Activated naive CD4-positive, alpha-beta T cell treated with anti-CD3 and anti-CD28 coated beads for 36 hours (primary cell): ENCODE measurements at regions of chr19 and their contacts with region 1.

Region 1: DNA sequence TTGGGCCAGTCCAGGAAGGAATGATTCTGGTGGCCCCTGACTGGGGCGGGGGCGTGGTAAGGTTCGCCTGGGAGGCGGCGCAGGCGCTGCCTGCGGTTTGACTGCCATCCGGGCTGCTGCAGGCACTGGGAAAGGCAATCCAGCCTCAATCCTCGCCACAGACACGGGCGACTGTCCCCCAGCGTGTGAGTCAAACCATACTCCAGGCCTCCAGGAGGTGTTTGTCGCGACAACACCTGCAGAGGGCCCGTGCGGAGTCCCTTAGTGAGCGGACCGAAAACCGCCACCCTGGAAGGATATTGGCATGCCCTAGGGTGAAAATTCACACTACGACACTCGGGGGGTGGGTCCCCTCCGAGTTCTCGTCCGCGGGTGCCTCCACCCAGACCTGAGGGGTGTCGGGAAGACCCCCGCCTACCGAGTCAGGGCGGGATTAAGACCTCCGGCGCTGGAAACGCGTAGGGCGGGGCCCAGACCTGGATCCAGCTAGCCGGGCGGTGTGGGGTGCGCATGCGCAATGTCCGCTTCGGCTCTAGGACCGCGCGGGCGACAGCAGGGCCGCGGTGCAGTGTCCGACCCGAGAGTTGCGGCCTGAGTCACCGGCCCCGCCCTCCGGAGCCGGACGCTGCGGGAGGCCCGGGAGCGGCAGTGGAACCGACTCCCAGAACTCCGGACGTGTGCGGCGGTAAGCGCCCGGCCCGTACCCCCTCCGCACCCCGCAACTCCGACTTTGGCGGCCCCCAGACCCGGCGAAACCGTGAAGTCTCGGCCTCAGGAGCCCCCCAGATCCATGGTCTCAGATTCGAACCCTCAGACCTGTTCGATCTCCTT is at the start of gene CAPNS1:
- DNase-seq: peak; percentile 92
- H3K4me3 Mint-ChIP-seq: peak within 1 kb of the TSS; percentile 90
- H3K27ac Mint-ChIP-seq: peak within 1 kb of the TSS; percentile 94
- H3K4me1 Mint-ChIP-seq: peaks cover 17% of the 10 kb centered on the region
- H3K27me3 Mint-ChIP-seq: no peaks in the 10 kb centered on the region
- total RNA-seq, gene CAPNS1: 301 to 307 TPM

Region 2: DNA sequence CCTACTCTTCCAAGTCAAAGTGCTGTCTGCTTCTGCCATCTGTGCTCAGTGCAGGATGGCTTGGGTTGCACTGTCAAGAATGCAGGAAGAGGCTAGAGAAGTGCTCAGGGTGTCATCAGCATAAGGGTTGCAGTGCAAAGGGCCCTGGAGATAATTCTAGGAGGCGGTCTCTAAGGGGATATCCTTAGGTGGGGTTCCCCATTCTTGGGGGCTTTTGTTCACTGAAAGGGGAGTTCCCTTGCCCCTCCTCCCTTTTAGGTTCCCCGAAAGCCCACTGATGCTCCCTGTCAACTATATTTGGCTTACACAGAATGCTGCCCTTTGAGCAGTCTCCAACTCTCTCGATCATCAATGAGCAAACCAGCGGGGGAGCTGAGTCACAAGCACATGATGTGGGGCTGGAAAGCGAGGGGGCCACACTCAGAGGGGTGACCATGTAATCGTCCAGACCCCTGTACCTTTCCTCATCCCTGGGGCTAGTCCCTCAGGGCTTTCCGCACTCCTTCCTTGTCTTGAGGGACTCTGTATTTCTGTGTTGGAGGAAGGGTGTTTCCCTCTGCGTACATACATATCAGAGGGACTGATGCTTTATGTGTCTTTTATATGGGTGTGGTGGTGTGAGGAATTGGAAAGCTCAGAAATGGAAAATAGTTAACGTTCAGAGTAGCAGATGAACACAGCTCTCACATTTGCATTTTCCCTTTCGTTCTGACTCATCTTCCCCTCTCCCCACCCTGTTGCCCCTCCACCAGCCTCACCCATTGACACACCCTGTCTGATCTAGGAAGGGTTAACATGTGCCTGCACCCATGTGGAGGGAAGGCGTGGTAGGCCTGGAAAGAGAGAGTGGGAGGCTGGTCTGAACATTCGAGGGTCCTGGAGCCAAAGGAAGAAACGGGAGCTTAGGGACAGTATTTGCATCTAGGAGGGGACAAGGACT is 428.6 kb before region 1 on chr19:
- CTCF ChIA-PET with region 1: no interaction called
- intact Hi-C with region 1: loop called (anchors 5 kb)
- DNase-seq: peak; percentile 87
- H3K4me3 Mint-ChIP-seq: peak overlapping the region; percentile 52
- H3K27ac Mint-ChIP-seq: peak overlapping the region; percentile 100
- H3K4me1 Mint-ChIP-seq: peaks cover 44% of the 10 kb centered on the region
- H3K27me3 Mint-ChIP-seq: no peaks in the 10 kb centered on the region

Region 3: DNA sequence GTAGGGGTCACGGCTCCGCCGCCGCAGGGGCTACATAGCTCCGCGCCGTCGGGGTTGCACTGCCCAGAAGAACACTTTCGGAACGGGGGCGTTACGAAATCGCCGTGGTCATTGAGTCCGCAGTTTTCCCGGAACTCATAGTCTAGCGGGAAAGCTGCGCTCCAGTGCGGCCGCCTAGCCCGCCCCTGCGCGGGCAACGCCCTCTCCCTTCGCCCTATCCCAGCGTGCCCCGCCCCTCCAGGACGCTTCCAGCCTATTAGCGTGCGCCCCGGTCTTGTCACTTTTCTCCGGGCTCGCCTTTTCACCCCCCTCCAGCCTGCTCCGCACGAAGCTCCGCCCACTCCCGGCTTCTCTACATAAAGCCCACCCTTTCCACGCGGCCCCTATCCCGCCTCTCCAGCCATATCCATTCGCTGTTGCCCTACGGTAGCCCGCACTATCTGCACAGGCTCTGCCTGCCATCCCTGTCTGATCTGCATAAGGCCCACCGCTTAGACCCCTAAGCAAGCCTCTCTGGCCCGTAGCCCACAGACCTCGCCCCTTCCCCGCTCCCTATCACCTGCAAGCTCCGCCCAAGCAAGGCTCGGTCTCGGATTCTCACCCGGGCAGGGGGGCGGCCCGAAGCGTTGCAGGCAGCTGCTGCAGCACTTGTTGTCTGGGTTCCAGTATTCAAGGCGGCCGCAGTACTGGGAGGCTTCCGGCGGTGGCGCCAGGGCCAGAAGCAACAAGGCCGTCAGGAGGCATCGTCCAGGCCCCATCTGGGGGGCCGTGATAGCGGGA is 399.1 kb before region 1 on chr19:
- CTCF ChIA-PET with region 1: no interaction called
- intact Hi-C with region 1: loop called (anchors 10 kb)
- DNase-seq: peak; percentile 99
- H3K4me3 Mint-ChIP-seq: peak overlapping the region; percentile 89
- H3K27ac Mint-ChIP-seq: peak overlapping the region; percentile 97
- H3K4me1 Mint-ChIP-seq: peaks cover 41% of the 10 kb centered on the region
- H3K27me3 Mint-ChIP-seq: no peaks in the 10 kb centered on the region

Region 4: DNA sequence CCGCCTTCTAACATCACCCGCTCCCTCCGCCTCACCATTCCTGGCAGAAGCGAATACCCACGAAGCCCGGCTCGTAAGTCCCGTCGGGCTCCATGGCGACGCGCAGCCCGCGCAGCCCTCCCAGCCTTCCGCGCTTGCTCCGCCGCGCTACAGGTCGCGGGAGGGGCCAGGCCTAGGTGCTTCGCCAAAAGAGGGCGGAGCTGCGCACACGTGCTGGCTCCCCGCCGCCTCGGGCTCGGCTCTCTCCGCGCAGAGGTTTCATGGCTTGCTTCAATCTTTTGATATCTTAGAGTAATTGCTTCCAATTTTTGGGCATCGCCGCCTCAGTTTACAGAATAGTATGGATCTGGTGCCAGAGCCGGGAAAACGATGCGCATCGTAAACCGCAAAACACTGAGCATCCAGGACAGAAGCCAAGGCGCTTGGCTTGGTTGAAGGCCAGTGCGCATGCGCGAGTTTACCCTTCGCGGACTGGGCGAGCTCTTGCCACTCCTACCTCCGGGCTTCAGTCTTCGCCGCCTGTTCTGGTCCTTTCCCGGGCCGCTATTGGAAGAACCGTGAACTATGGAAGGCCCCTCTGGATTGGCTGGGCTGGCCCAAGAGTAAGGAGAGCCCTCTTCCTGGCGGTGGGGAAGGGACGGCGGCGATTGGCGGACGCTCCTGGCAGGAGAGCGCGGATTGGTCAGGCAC is 24.8 kb before region 1 on chr19 and contains the start of gene POLR2I:
- CTCF ChIA-PET with region 1: no interaction called
- intact Hi-C with region 1: loop called (anchors 1 kb)
- DNase-seq: peak; percentile 99
- H3K4me3 Mint-ChIP-seq: peak within 1 kb of the TSS; percentile 99
- H3K27ac Mint-ChIP-seq: peak within 1 kb of the TSS; percentile 91
- H3K4me1 Mint-ChIP-seq: peaks cover 31% of the 10 kb centered on the region
- H3K27me3 Mint-ChIP-seq: no peaks in the 10 kb centered on the region
- total RNA-seq, gene POLR2I: 86.8 to 87.4 TPM

Region 5: DNA sequence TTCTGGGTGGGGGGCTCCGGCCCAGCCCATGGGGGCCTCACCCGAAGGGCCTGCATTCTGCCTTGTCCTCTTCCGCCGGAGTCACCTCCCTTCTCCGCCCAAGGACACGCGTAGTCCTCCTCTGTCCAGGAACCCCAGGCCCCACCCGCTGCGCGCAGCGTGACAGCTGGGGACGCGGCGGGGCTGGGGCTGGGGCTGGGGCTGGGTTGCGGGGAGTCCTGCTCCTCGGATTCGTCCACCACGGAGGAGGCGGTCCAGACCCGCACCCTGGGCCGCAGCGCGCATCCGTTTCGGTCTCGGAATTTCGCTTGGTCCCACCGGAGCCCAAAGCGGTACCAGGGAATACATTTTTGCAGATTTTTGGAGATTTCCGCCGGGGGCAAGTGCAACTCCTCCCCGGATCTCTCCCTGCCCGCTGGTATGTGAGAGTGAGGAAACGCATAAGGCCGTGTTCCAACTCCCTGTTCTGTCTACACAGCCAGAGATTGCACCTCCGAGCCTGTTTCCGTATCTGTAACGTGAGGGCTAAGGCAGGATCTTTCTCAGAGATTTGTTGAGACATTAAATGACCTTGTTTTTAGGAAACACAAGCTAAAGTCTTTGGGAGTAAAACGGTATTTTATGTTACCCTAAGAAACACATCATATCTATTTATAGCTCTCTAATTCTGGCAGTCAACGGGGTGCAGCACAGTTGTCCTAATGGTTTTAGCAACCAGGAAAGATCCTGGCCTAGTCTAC is 12.8 kb after region 1 on chr19 and contains the start of gene COX7A1:
- CTCF ChIA-PET with region 1: no interaction called
- intact Hi-C with region 1: no loop called
- DNase-seq: no peak
- H3K4me3 Mint-ChIP-seq: no peak within 1 kb of the TSS
- H3K27ac Mint-ChIP-seq: no peak within 1 kb of the TSS
- H3K4me1 Mint-ChIP-seq: no peaks in the 10 kb centered on the region
- H3K27me3 Mint-ChIP-seq: no peaks in the 10 kb centered on the region
- total RNA-seq, gene COX7A1: not detected